Right ventricle myocardium superior (tissue), 1 donor: ENCODE measurements at regions of chr13 and their contacts with region 1.

Region 1: GRCh38 chr13:26262156-26262555 is 8.2 kb downstream of the CDK8 start:
- DNase-seq: no peak
- ATAC-seq: no peak

Region 2: DNA sequence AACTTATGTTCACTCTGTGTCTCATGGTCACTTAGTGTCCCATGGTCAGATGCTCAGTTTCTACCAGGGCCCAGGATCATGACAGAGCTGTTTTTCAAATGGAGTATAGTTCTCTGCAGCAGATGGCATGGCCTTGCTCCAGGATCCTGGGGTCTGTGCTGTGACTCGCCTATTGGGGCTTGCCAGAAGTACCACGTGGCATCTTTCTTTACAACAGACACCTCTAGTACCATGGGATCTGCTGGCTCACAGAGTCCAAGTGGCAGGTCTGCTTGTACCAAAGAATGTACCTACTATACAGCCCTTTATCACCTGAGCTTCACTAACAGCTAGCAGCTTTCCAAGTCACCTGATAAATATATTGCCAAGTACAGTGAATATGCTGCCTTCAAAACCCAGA is 34.1 kb before region 1 on chr13:
- intact Hi-C with region 1: loop called (anchors 5 kb)
- DNase-seq: no peak
- ATAC-seq: peak; percentile 26

Region 3: DNA sequence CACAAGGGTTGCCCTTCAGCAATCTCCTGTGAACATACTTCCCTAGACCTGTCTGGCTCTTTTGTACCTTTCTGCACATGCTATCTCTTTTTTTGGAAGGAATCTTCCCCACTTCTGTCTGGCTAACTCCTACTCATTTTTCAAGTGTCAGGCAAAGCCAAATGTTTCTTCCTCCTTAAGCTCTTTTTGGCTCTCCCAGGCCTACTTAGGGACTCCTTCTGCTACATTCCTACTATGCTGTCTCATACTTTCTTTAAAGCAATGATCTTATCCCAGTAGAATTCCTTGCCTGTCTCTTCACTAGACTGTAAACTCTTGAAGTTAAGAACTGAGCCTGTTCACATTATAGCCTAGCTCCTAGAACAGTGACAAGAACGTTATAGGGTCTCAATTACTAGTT is 180.4 kb after region 1 on chr13:
- intact Hi-C with region 1: no loop called
- DNase-seq: no peak
- ATAC-seq: peak; percentile 64

Region 4: DNA sequence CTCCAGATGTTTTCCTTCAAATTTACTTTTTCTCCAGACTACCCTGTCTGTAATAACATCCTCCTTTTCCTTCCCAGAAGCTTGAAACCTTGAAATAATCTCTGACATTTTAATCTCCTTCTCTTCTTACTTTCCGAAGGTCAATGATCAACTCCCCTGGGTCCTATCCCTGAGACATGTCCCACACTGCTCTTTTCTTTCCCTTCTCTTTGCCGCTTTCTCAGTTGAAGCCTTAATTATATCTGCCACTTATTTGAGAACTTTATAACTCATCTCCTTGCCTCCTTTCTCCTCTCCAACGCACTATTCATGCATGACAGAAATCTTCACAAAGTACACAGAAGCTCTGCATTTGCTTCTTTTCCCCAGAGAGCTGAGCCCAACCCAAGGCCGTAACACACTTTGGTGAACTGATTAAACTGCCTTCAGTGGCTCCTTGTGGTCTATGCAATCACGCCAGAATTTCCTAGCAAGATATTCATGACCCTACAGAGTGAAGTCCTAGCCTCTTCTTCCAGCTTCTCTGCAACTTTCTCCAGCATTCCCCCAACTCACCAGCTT is 286.1 kb after region 1 on chr13:
- intact Hi-C with region 1: no loop called
- DNase-seq: no peak
- ATAC-seq: no peak